Caco-2 (cell line): ENCODE measurements at regions of chr10 and their contacts with region 1.

Region 1: DNA sequence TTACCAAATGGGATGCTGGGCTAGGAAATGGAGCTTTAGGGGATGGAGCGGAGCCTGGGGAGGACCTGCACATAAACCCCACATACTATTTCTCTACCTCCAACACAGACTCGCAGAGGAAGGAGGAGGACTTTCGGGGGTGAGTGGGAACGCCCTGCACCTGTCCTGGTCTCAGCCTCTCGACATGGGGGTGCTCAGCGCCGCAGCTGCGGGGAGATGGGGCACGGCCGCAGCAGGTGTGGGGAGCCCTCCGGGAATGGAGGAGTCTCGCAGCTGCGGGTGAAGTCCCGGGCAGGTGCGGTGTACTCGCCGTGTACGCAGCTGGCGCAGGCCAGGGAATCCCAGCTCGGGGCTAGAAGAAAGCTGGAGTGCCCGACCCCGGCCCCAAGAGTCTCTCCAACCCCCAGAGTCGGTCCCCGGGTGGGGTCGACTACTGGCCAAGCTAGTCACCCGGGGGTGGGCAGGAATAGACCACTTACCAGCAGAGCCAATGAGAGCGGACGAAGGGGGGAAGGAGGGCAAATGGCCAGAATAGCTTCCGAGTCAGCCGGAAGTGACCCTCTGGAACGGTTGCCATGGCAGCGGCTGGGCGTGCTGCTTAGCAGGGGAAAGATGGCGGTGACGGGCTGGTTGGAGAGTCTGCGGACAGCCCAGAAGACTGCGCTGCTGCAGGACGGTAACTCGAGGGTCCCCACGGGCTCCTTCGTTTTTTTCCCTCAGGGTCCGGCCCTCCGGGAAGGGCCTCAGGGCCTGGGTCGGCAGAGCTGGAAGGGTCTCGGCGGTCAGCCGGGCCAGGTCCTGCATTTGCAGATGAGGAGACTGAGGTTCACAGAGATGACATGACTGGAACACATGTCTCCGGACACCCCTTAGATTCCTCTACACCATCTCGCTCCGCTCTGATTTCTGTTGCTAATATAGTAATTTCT is at the starts of genes DPCD and POLL:
- DNase-seq: peak; percentile 94 to 96
- H3K4me3 ChIP-seq: peak within 1 kb of the TSS; percentile 85
- H3K4me3 Mint-ChIP-seq: peak within 1 kb of the TSS; percentile 95
- H3K27ac Mint-ChIP-seq: peak within 1 kb of the TSS; percentile 94
- H3K4me1 ChIP-seq: no peaks in the 10 kb centered on the region
- H3K4me1 Mint-ChIP-seq: peaks cover 11% of the 10 kb centered on the region
- H3K27me3 ChIP-seq: no peaks in the 10 kb centered on the region
- H3K27me3 Mint-ChIP-seq: no peaks in the 10 kb centered on the region
- CTCF ChIP-seq: no peak
- total RNA-seq, gene DPCD: 13.1 and 14.0 TPM in 2 replicates
- total RNA-seq, gene POLL: 34.7 and 35.5 TPM in 2 replicates

Region 2: GRCh38 chr10:101429423-101429822 is 158.6 kb before region 1 on chr10:
- CTCF ChIA-PET with region 1: no interaction called
- POLR2A ChIA-PET with region 1: no interaction called
- intact Hi-C with region 1: no loop called
- DNase-seq: no peak
- H3K4me3 ChIP-seq: no peak overlapping the region
- H3K4me3 Mint-ChIP-seq: no peak overlapping the region
- H3K27ac Mint-ChIP-seq: no peak overlapping the region
- H3K4me1 ChIP-seq: no peaks in the 10 kb centered on the region
- H3K4me1 Mint-ChIP-seq: no peaks in the 10 kb centered on the region
- H3K27me3 ChIP-seq: no peaks in the 10 kb centered on the region
- H3K27me3 Mint-ChIP-seq: no peaks in the 10 kb centered on the region
- CTCF ChIP-seq: no peak

Region 3: DNA sequence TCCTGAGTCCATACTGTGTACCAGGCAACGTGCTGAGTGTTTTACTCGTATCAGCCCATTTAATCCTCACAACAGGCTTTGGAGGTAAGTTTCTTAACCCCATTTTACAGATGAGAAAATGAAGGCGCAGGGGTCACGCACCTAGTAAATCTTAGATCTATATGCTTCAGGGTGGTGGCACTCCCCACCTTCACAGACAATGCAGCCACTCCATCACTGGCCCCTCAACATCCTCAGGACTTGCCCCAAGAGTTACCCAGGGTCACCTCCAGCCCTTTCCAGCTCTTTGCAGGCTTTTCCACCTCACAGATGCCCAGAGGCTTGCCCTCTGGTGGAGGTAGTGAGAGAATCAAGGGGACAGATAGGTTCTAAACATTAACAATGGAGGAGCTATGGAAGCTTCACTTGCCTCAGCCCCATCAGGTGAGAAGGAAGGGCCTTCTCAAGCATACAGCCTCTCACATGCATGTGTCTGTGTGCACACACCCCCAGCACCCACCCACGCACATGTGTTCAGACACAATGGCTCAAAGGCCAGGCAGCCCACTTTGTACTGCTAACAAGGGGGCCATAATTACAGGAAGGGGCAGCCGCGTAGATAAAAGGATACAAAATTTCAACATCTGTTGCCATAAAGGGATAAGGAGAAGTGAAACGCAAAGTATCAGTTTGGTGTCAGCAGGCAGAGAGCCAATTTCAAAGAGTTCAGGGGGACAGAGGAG is 29.3 kb after region 1 on chr10:
- CTCF ChIA-PET with region 1: no interaction called
- POLR2A ChIA-PET with region 1: interaction called, 10 read pairs
- intact Hi-C with region 1: no loop called
- DNase-seq: no peak
- H3K4me3 ChIP-seq: no peak overlapping the region
- H3K4me3 Mint-ChIP-seq: no peak overlapping the region
- H3K27ac Mint-ChIP-seq: no peak overlapping the region
- H3K4me1 ChIP-seq: no peaks in the 10 kb centered on the region
- H3K4me1 Mint-ChIP-seq: no peaks in the 10 kb centered on the region
- H3K27me3 ChIP-seq: no peaks in the 10 kb centered on the region
- H3K27me3 Mint-ChIP-seq: no peaks in the 10 kb centered on the region
- CTCF ChIP-seq: peak in 1 of 2 experiments; percentile 1

Region 4: DNA sequence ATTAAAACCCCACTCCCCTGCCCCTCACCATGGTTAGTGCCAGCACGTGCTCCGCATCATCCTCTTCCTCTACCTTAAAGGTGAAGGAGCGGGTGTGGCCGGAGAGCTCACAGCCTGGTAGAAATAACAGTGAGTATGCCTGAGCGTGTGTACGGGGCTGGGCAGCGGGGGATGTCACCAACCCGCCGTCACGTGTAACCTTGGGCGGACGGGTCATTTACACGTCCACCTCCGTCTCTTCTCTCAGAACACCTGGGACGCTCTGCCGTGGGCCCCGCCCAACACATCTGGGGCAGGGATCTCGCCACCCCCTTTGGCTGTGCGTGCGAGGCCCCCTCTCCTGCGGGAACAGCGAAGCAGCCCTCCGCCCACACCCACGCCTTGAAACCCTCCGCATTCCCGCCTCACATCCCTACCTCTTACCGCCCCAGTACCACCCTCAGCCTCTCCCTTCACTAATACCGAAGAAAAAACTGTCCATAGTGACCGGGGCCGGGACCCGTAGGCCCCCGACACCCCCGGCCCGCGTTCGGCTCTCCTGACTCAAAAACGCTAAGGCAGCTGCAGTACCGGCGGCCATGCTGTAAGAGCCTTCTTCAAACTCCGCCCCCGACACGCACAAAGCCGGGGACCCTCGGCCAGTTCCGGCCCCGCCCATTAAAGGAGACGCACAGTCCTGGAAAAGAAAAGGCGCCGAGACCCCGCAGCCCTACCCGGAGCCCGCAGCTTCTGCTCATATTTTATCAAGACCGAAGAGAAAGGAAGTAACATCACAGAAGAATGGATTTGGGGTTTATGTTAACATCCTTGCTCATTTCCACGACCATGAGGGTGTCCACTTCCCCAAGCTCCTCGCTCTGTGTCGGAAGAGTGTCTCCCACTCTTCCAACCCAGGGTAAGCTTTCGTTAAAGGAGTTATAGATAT is 195.1 kb after region 1 on chr10 and contains the start of gene NPM3:
- CTCF ChIA-PET with region 1: interaction called, 7 read pairs
- POLR2A ChIA-PET with region 1: no interaction called
- intact Hi-C with region 1: loop called (anchors 5 kb)
- DNase-seq: peak; percentile 87 to 89
- H3K4me3 ChIP-seq: peak within 1 kb of the TSS; percentile 96
- H3K4me3 Mint-ChIP-seq: peak within 1 kb of the TSS; percentile 93
- H3K27ac Mint-ChIP-seq: peak within 1 kb of the TSS; percentile 97
- H3K4me1 ChIP-seq: peaks cover 10% of the 10 kb centered on the region
- H3K4me1 Mint-ChIP-seq: peaks cover 8% of the 10 kb centered on the region
- H3K27me3 ChIP-seq: no peaks in the 10 kb centered on the region
- H3K27me3 Mint-ChIP-seq: no peaks in the 10 kb centered on the region
- CTCF ChIP-seq: no peak
- total RNA-seq, gene NPM3: 92.6 and 103 TPM in 2 replicates